Activated CD4-positive, alpha-beta memory T cell treated with anti-CD3 and anti-CD28 coated beads for 36 hours (primary cell): ENCODE measurements at regions of chr12 and their contacts with region 1.

Region 1: GRCh38 chr12:94149119-94149780 is 873 bp downstream of the PLXNC1 start:
- DNase-seq: peak; percentile 54
- H3K4me3 Mint-ChIP-seq: peak overlapping the region; percentile 82
- H3K27ac Mint-ChIP-seq: no peak overlapping the region
- H3K4me1 Mint-ChIP-seq: peaks cover 19% of the 10 kb centered on the region
- H3K27me3 Mint-ChIP-seq: peaks cover 11% of the 10 kb centered on the region

Region 2: GRCh38 chr12:92356425-92356824 is 1792.8 kb before region 1 on chr12:
- CTCF ChIA-PET with region 1: no interaction called
- POLR2A ChIA-PET with region 1: no interaction called
- intact Hi-C with region 1: no loop called
- DNase-seq: no peak
- H3K4me3 Mint-ChIP-seq: no peak overlapping the region
- H3K27ac Mint-ChIP-seq: no peak overlapping the region
- H3K4me1 Mint-ChIP-seq: peaks cover 30% of the 10 kb centered on the region
- H3K27me3 Mint-ChIP-seq: no peaks in the 10 kb centered on the region

Region 3: DNA sequence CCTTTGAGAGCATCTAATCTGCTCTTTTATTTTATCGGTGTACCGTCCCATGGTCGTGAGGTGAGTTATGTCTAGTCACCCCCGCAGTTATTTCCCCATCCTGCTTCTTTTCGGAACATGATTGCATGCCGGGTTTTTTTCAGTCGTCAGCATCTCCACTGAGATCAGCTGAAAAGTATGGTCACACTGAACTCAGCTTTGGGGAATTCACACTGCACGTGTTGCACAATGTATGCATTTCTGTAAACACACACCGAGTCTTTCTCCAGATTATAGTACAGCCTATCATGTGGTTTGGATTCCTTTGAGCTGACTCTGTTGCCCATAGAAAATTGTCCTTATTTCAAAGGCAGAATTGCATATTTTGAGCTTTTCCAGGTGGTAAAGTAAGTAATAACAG is 23.7 kb after region 1 on chr12:
- CTCF ChIA-PET with region 1: interaction called, 3 read pairs
- POLR2A ChIA-PET with region 1: interaction called, 4 read pairs
- intact Hi-C with region 1: loop called (anchors 2 kb)
- DNase-seq: no peak
- H3K4me3 Mint-ChIP-seq: no peak overlapping the region
- H3K27ac Mint-ChIP-seq: no peak overlapping the region
- H3K4me1 Mint-ChIP-seq: peaks cover 60% of the 10 kb centered on the region
- H3K27me3 Mint-ChIP-seq: no peaks in the 10 kb centered on the region

Region 4: GRCh38 chr12:94326727-94327126 is 177.5 kb after region 1 on chr12:
- CTCF ChIA-PET with region 1: no interaction called
- POLR2A ChIA-PET with region 1: no interaction called
- intact Hi-C with region 1: loop called (anchors 2 kb)
- DNase-seq: peak; percentile 20
- H3K4me3 Mint-ChIP-seq: no peak overlapping the region
- H3K27ac Mint-ChIP-seq: peak overlapping the region; percentile 8
- H3K4me1 Mint-ChIP-seq: peaks cover 24% of the 10 kb centered on the region
- H3K27me3 Mint-ChIP-seq: no peaks in the 10 kb centered on the region

Region 5: DNA sequence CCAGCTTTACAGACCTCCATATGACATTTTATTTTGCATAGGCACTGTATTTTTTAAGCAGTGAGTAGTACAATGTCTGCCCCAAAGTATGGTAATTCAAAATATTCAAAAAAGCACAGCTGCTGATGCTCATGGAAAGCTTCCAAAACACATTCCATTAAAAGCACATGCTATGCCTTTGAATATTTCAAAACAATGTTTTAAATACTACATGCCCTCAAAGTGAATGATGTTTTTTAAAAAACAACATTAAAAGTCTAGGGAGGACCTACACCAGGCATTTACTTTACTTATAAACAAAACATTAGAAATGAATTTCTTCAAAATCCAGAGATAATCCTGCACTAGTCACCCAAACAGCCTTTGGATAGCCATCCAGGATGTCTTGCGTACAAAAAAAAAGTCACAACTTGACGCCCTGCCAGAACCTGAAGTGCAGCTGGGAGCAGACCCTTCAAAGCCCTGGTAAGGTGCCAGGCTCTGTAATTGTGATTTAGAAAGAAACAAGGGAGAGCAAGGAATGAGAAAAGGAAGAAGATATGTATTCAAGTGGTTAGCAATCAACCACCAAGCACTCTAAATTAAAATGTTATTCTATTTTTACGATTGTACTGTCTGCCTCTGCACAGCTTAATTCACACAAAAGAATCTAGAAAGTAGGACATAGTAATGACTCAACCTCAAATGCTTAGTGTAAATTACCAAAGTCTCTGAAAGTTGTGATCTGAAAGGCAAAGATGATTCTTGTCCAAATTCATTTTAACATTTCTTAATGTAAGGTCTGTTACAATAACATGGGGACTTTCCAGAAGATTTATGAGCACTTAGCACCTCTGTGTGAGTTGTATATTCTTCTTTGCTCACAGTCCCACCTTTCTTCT is 278.5 kb after region 1 on chr12:
- CTCF ChIA-PET with region 1: no interaction called
- POLR2A ChIA-PET with region 1: no interaction called
- intact Hi-C with region 1: loop called (anchors 2 kb)
- DNase-seq: peak; percentile 16
- H3K4me3 Mint-ChIP-seq: no peak overlapping the region
- H3K27ac Mint-ChIP-seq: peak overlapping the region; percentile 54
- H3K4me1 Mint-ChIP-seq: peaks cover 29% of the 10 kb centered on the region
- H3K27me3 Mint-ChIP-seq: no peaks in the 10 kb centered on the region

Region 6: DNA sequence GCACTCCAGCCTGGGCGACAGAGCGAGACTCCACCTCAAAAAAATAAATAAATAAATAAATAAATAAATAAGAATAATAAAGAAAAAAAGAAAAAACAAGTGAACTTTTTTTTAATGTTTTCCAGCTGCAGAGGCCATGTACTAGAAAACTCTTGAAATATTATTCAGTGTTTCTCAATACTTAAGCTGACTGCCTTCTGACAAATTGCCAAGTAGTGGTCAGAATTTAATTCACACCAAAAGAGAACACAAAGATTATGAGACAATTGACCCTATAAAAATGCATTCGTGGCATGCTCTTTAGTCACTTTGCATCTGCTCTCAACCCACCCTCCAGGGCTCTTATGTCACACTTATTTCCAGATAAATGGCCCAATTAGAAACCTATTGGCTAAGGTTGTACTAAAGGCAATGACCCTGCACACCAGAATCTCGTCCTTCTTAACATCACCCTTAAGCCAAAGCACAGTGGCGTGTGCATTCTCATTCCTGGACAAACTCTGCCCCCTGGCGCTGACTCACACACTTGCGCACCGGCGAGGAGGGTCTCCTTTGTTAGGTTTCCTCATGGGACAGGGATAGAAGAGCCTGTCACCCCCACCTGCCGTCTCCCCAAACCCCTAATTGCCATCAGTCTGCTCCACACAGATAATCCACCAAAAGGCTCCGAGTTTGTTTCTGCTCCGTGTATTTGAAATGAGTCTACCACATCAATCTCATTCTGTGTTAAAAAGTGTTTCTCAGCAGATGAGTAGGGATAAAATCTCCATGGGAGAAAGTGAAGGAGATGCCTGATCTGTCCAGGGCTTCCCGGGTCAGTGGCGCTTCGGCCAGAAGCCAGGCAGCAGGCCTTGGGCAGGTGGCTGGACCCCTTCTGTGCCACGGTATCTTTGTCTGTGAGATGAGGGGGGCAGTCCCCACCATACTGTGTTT is 383.5 kb after region 1 on chr12:
- CTCF ChIA-PET with region 1: interaction called, 6 read pairs
- POLR2A ChIA-PET with region 1: interaction called, 3 read pairs
- intact Hi-C with region 1: loop called (anchors 1 kb)
- DNase-seq: peak; percentile 81
- H3K4me3 Mint-ChIP-seq: no peak overlapping the region
- H3K27ac Mint-ChIP-seq: no peak overlapping the region
- H3K4me1 Mint-ChIP-seq: no peaks in the 10 kb centered on the region
- H3K27me3 Mint-ChIP-seq: peaks cover 5% of the 10 kb centered on the region